ENCODE measurements at regions of chr18 and their contacts with region 1.

Region 1: DNA sequence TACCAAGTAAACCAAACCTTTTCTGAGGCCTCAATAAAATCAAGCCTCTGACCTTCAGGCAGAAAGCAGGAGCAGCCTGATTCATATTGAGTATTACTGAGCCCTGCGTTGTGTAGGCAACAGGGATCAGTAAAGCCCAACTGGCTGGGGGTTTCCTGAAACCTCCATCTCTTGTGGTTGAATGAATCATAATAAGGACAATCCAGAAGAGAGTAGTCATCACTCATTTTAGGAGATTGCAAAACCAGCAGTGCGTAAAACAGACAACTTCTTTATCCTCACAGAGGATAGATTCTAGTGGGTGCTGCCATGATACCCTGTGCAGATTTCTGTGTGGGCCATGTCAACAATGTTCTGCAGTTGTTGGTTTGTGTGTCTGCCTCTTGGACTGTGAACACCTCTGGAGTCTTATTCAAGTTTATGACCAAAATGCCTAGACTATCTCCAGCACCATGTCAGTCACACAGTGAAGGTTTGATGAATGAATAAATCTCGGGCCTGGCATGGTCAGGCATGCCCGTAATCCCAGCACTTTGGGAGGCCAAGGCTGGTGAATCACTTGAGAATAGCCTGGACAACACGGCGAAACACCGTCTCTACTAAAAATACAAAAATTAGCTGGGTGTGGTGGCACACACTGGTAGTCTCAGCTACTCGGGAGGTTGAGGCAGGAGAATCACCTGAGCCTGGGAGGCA is 51.8 kb upstream of the RAB27B start:
- DNase-seq: peak; percentile 99
- H3K4me3 ChIP-seq: no peak overlapping the region
- H3K27ac ChIP-seq: peak overlapping the region; percentile 98
- H3K4me1 ChIP-seq: peaks cover 30% of the 10 kb centered on the region
- H3K27me3 ChIP-seq: no peaks in the 10 kb centered on the region
- CTCF ChIP-seq: no peak

Region 2: DNA sequence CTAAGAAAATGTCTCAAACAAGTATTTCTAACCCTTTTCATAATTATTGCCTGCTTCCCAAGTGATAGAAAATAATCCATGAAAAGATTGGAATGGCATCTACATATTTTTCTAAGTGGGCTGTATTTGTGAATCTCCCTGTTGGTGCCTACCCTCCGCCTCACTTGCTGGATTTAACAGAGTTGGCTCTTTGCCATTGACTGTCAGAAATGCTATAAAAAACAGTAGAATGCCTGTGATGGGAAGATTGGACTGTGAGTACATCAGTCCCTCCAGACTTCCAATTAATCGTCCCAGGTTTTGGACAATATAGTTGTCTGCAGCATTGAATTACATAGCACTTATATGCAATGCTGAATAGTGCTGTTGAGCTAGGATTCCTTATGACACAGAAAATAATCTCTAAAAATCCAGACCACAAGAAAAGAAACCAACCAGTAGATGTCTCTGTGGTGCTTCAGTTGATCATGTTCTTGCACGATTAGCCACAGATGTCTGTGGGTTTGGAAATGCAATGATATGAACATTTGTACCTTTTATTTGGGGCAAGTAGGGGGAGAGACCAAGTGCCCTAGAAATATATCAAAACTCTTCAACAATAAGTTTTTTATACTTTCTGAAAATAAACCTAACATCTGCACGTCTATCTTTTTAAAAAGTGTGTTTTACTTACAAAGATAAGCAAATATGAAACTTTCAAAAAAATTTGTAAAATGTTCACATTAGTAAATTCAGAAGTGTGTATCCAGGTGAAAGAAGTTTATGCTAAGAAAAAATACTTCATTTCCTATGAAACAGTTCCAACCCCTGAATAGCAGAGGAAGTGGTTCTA is 96.9 kb before region 1 on chr18:
- CTCF ChIA-PET with region 1: no interaction called
- dilution Hi-C with region 1: no loop called
- in situ Hi-C with region 1: no loop called
- intact Hi-C with region 1: loop called (anchors 1 kb)
- DNase-seq: peak; percentile 64
- H3K4me3 ChIP-seq: no peak overlapping the region
- H3K27ac ChIP-seq: no peak overlapping the region
- H3K4me1 ChIP-seq: no peaks in the 10 kb centered on the region
- H3K27me3 ChIP-seq: no peaks in the 10 kb centered on the region
- CTCF ChIP-seq: peak; percentile 55 to 63

Region 3: DNA sequence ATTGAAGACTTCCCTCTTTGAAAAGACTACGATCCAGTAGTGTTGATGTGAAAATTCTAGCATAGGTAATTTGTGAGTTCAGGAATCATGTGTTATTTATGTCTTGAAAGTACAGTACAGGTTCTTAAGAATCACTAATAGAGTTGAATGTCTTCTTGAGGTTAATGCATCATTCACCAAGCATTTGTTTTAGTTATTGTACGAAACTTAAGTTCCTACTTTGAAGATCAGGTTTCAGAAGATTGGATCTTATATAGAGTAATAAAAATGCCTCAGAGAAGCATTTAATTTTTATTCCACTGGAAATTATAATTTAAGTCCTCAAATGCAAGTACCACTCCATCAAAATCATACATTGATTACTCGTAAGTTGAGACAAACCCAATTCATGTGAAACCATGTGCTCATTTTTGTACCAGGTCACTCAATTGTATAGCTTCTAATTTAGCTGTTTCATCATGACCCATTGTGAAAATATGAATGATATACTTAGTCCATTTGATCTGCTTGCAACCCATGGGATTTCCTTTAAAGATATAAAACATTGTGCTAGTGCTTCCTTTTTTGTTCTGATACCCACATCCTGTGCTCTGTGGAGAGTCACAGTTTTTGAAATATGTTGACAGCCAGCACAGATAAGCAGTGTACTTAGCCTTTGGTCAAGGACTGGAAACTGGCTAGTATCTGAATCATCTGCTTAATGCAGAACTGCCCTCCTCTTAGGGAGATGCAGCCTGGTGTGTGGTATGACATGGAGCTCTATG is 29.3 kb after region 1 on chr18:
- CTCF ChIA-PET with region 1: no interaction called
- dilution Hi-C with region 1: no loop called
- in situ Hi-C with region 1: no loop called
- intact Hi-C with region 1: loop called (anchors 2 kb)
- DNase-seq: peak; percentile 84
- H3K4me3 ChIP-seq: no peak overlapping the region
- H3K27ac ChIP-seq: no peak overlapping the region
- H3K4me1 ChIP-seq: peaks cover 17% of the 10 kb centered on the region
- H3K27me3 ChIP-seq: no peaks in the 10 kb centered on the region
- CTCF ChIP-seq: no peak

Region 4: GRCh38 chr18:54828281-54828881 is 52.0 kb after region 1 on chr18 and contains the start of gene RAB27B:
- CTCF ChIA-PET with region 1: no interaction called
- dilution Hi-C with region 1: no loop called
- in situ Hi-C with region 1: loop called in 1 of 2 experiments (anchors 5 kb)
- intact Hi-C with region 1: loop called (anchors 1 kb)
- DNase-seq: peak; percentile 96
- H3K4me3 ChIP-seq: peak within 1 kb of the TSS; percentile 76 to 85 (median 79)
- H3K27ac ChIP-seq: peak within 1 kb of the TSS; percentile 90
- H3K4me1 ChIP-seq: peaks cover 27% of the 10 kb centered on the region
- H3K27me3 ChIP-seq: no peaks in the 10 kb centered on the region
- CTCF ChIP-seq: no peak
- total RNA-seq, gene RAB27B: 1.8 to 19.3 TPM

Region 5: GRCh38 chr18:54926593-54927301 is 150.3 kb after region 1 on chr18:
- CTCF ChIA-PET with region 1: no interaction called
- dilution Hi-C with region 1: no loop called
- in situ Hi-C with region 1: no loop called
- intact Hi-C with region 1: loop called (anchors 5 kb)
- DNase-seq: peak; percentile 85
- H3K4me3 ChIP-seq: no peak overlapping the region
- H3K27ac ChIP-seq: no peak overlapping the region
- H3K4me1 ChIP-seq: no peaks in the 10 kb centered on the region
- H3K27me3 ChIP-seq: no peaks in the 10 kb centered on the region
- CTCF ChIP-seq: no peak

Measured in mammary epithelial cell (primary cell).